ENCODE measurements at regions of chr11 and their contacts with region 1.

Region 1: GRCh38 chr11:27184458-27185312 is 144.1 kb downstream of the BBOX1 start:
- DNase-seq: no peak
- H3K4me3 ChIP-seq: no peak overlapping the region
- H3K27ac ChIP-seq: no peak overlapping the region
- H3K4me1 ChIP-seq: peaks cover 0 to 30% (median 15%) of the 10 kb centered on the region in 4 donors
- H3K27me3 ChIP-seq: no peaks in the 10 kb centered on the region
- CTCF ChIP-seq: no peak
- EP300 ChIP-seq: no peak
- POLR2A ChIP-seq: no peak

Region 2: GRCh38 chr11:27291302-27291889 is 106.7 kb after region 1 on chr11:
- intact Hi-C with region 1: loop called (anchors 5 kb)
- DNase-seq: peak; percentile 38 to 55
- H3K4me3 ChIP-seq: no peak overlapping the region
- H3K27ac ChIP-seq: peak overlapping the region in 2 of 5 donors; percentile 46 to 52
- H3K4me1 ChIP-seq: peaks cover 0 to 2% (median 0%) of the 10 kb centered on the region in 4 donors
- H3K27me3 ChIP-seq: no peaks in the 10 kb centered on the region
- CTCF ChIP-seq: no peak
- EP300 ChIP-seq: no peak
- POLR2A ChIP-seq: no peak

Region 3: GRCh38 chr11:27482793-27483192 is 298.1 kb after region 1 on chr11:
- intact Hi-C with region 1: loop called (anchors 5 kb)
- DNase-seq: no peak
- H3K4me3 ChIP-seq: no peak overlapping the region
- H3K27ac ChIP-seq: no peak overlapping the region
- H3K4me1 ChIP-seq: no peaks in the 10 kb centered on the region
- H3K27me3 ChIP-seq: no peaks in the 10 kb centered on the region
- CTCF ChIP-seq: no peak
- EP300 ChIP-seq: no peak
- POLR2A ChIP-seq: no peak

Measured in stomach (tissue), 19 donors.